ENCODE measurements at regions of chr13 and their contacts with region 1.

Region 1: DNA sequence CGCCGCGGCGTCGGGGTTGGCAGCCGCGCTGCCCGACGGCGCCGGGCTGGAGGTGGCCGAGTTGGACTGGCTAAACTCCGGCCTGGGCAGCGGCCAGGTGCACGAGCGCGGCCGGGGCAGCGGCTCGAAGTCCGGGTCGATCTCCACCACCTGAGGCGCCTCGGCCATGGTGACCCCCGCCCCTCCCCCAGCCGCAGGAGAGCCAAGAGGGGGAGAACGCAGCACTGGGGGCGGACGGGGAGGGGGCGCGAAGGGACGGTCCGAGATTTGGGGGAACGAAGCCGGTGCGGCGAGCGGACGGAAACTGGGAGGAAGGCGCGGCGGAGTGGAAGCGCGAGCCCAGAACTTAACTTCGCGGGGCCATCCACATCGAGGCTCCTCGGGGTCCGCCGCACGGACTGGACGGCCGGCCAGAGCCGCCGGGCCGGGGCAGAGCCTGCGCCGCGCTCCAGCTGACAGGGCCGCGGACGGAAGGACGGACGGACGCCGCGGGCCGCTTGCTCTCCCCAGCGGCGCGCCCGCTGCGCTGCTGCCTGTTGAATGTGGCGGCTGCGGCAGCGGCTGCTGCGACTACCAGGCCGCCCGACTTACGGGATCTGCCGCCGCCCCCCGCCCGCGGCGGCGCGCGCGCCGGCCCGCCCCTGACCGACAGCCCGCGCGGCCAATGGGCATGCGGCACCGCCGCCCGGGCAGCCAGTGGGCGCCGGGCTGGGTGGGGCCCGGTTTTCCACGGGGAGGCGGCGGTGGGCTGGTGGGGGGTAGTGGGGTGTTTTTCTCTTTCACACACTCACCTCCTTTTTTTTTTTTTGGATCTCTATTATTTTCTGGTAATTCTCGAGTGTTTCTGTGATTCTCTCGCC is at the start of gene FOXO1:
- DNase-seq: peak; percentile 62 to 96 (median 90)

Region 2: DNA sequence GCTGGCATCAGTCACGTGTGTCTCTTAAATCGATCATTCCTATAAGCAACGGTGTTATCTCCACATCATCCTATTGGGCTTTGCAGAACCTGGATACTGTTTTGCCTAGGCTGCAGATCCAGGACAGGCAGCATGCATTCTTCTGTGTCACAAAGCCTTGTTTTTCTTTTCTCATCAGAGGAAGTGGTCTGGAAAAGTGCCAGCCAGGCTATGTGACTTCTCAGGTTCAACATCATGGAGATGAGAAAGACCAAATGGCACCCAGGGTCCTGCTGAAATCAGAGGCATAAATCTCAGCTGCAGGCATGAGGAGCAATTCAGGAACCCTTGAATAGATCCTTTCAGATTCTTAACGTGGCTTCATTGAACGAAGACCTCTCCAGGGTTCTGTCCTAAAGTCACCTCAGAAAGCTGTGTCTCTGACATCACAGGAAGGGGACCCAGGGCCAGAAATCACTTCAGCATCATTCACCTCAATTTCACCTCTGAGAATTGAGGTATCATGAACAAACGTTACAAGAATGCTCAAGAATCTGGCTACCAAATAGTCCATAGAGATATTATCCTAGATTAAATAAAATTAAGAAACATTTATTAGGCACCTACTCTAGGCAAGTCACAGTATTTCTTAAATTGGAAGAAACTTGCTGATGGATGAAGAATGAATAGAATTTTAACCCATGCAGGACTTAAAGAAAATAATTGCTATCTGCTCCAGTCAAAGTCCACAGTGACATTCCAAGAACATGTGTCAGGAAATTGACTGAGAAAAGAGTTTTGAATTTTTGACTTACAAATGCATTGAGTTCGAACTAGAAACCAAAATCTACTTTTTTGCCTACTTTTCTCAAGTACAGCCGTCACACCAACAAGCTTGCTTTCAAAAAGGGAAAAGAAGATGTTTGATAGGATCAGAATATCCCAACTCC is 886.7 kb before region 1 on chr13:
- intact Hi-C with region 1: loop called (anchors 5 kb)
- DNase-seq: no peak

Region 3: GRCh38 chr13:40069173-40070044 is 596.9 kb before region 1 on chr13:
- intact Hi-C with region 1: loop called (anchors 10 kb)
- DNase-seq: peak; percentile 39 to 94 (median 84)

Region 4: DNA sequence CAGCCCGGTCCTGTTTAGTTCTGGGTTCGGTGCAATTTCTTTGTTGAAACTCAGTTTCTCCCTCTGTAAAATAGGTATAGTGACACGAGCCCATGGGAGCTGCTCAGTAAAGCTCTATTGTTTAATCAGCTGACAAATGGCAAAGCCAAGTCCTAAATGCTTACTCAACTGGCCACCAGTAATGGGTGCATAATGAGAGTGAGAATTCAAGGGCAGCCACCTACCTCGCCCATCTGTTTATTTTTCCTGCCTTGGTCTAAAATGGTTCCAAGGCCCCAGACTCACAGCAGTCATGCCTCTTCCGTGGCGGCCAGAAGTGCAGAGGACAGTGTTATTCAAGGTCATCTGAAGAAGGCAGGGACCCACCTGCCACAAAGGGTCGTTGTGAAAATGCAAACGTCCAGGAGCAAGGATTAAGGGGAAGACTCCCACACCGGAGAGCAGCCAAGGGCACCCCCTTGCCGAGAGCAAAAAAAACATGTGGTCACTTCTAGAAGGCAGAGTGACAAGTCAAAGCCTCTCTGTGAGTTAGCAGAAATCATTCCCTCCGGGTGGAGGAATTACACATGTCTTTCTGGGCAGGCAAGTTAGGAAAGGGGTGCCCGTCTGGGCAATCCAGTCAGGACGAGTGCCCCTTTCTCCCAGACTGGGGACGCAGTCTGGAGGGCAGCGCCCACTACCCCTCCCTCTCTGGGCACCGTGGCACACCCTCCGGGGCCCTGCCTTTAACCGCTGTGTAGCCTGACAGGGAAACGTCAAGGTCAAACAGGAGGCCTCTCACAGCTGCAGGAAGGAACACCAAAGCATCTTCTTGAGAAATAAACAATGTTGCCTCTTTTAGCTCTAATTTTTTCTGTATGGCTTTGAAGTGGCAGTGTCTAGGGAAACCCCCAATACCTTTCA is 186.0 kb before region 1 on chr13:
- intact Hi-C with region 1: loop called (anchors 5 kb)
- DNase-seq: no peak

Region 5: GRCh38 chr13:40589285-40590109 is 76.8 kb before region 1 on chr13:
- intact Hi-C with region 1: loop called (anchors 10 kb)
- DNase-seq: peak in 25 of 42 donors; percentile 18 to 72 (median 44)